CD4-positive, alpha-beta memory T cell (primary cell): ENCODE measurements at regions of chr3 and their contacts with region 1.

Region 1: DNA sequence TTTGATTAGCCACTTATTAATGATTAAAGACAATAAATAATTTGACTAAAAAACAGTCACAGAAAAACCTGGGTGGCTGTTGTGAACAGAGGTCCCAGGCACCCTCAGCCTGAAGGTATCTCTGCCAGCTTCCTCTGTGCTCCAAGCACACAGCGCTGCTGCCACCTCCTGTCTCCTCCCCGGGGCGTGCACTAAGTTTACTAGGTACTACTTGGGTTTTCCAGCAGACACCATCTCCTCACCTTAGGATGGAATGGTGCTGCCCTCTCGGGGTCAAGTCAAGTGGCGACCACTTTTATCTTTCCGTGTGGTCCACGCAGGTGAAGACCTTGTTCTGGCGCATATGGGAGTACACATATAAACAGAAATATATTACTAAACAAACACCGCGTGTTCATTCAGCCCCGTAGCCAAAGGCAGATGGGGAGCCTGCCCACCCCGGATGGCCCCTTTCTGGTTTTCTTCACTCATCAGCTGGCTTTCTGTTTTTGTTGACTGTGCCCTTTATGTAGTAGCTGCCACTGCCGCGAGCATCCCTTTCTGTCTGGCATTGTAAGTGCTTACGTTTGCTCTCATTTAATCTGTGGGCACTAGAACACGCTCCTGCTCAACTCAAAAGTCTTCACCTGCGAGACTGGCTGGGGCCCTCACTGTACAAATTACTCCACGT is 128.0 kb downstream of the LRIG1 start:
- DNase-seq: peak; percentile 35 to 56 (median 44)
- H3K4me3 ChIP-seq: no peak overlapping the region
- H3K4me3 Mint-ChIP-seq: no peak overlapping the region
- H3K27ac ChIP-seq: no peak overlapping the region
- H3K27ac Mint-ChIP-seq: peak overlapping the region in 6 of 7 donors; percentile 36 to 82 (median 74)
- H3K4me1 ChIP-seq: peaks cover 13% of the 10 kb centered on the region
- H3K4me1 Mint-ChIP-seq: peaks cover 18 to 45% (median 19%) of the 10 kb centered on the region in 4 donors
- H3K27me3 ChIP-seq: no peaks in the 10 kb centered on the region
- H3K27me3 Mint-ChIP-seq: no peaks in the 10 kb centered on the region

Region 2: DNA sequence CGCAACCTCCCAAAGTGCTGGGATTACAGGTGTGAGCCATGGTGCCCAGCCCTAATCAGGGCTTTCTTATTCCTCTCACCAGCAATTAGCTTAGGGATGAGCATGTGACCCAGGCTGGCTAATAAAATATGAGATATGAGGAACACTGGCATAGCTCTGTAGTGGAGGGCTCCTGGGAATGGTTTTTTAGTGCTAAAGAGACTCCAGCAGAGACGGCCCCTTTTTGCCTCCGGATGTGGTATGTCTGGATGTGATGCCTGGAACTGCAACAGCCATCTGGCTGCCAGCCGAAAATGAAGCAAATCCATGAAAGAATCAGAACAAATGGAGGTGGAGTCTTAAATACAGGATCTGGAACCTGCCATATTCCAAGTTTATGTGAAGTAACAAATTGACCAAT is 265.0 kb before region 1 on chr3:
- CTCF ChIA-PET with region 1: no interaction called
- POLR2A ChIA-PET with region 1: no interaction called
- intact Hi-C with region 1: no loop called
- DNase-seq: no peak
- H3K4me3 ChIP-seq: no peak overlapping the region
- H3K4me3 Mint-ChIP-seq: no peak overlapping the region
- H3K27ac ChIP-seq: no peak overlapping the region
- H3K27ac Mint-ChIP-seq: no peak overlapping the region
- H3K4me1 ChIP-seq: no peaks in the 10 kb centered on the region
- H3K4me1 Mint-ChIP-seq: peaks cover 0 to 2% (median 0%) of the 10 kb centered on the region in 4 donors
- H3K27me3 ChIP-seq: no peaks in the 10 kb centered on the region
- H3K27me3 Mint-ChIP-seq: peaks cover 0 to 5% of the 10 kb centered on the region in 2 donors

Region 3: GRCh38 chr3:66153481-66154443 is 219.1 kb before region 1 on chr3:
- CTCF ChIA-PET with region 1: no interaction called
- POLR2A ChIA-PET with region 1: no interaction called
- intact Hi-C with region 1: no loop called
- DNase-seq: no peak
- H3K4me3 ChIP-seq: no peak overlapping the region
- H3K4me3 Mint-ChIP-seq: no peak overlapping the region
- H3K27ac ChIP-seq: no peak overlapping the region
- H3K27ac Mint-ChIP-seq: no peak overlapping the region
- H3K4me1 ChIP-seq: no peaks in the 10 kb centered on the region
- H3K4me1 Mint-ChIP-seq: no peaks in the 10 kb centered on the region
- H3K27me3 ChIP-seq: no peaks in the 10 kb centered on the region
- H3K27me3 Mint-ChIP-seq: peaks cover 4 to 5% of the 10 kb centered on the region in 2 donors

Region 4: GRCh38 chr3:66276705-66277274 is 96.0 kb before region 1 on chr3:
- CTCF ChIA-PET with region 1: interaction called, 80 read pairs
- POLR2A ChIA-PET with region 1: interaction called, 24 read pairs
- intact Hi-C with region 1: loop called (anchors 1 kb)
- DNase-seq: peak; percentile 71 to 75 (median 73)
- H3K4me3 ChIP-seq: no peak overlapping the region
- H3K4me3 Mint-ChIP-seq: no peak overlapping the region
- H3K27ac ChIP-seq: no peak overlapping the region
- H3K27ac Mint-ChIP-seq: peak overlapping the region; percentile 6 to 86 (median 71)
- H3K4me1 ChIP-seq: peaks cover 34% of the 10 kb centered on the region
- H3K4me1 Mint-ChIP-seq: peaks cover 25 to 45% (median 34%) of the 10 kb centered on the region in 4 donors
- H3K27me3 ChIP-seq: no peaks in the 10 kb centered on the region
- H3K27me3 Mint-ChIP-seq: no peaks in the 10 kb centered on the region

Region 5: DNA sequence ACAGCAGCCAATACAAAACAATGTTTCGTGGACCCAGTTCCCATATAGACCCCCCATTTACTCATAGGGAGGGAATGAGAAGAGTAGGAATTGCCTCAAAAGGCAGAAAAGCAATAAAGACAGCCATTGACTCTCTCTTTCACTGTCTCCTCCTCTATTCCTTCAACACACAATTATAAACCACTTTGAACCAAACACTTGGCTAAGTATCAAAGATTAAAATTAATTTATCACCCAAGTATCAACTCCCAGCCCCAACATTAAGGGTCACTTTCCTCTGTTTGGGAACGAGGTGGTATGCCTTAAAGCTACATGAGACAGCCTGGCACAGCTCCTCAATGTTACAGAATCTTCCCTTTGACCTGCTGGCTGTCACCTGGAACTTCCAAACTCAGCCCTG is 144.4 kb after region 1 on chr3:
- CTCF ChIA-PET with region 1: no interaction called
- POLR2A ChIA-PET with region 1: no interaction called
- intact Hi-C with region 1: no loop called
- DNase-seq: no peak
- H3K4me3 ChIP-seq: no peak overlapping the region
- H3K4me3 Mint-ChIP-seq: no peak overlapping the region
- H3K27ac ChIP-seq: no peak overlapping the region
- H3K27ac Mint-ChIP-seq: peak overlapping the region in 1 of 7 donors; percentile 86
- H3K4me1 ChIP-seq: no peaks in the 10 kb centered on the region
- H3K4me1 Mint-ChIP-seq: peaks cover 0 to 2% (median 0%) of the 10 kb centered on the region in 4 donors
- H3K27me3 ChIP-seq: no peaks in the 10 kb centered on the region
- H3K27me3 Mint-ChIP-seq: peaks cover 1 to 2% of the 10 kb centered on the region in 2 donors

Region 6: GRCh38 chr3:66609659-66610561 is 237.1 kb after region 1 on chr3:
- CTCF ChIA-PET with region 1: no interaction called
- POLR2A ChIA-PET with region 1: no interaction called
- intact Hi-C with region 1: no loop called
- DNase-seq: no peak
- H3K4me3 ChIP-seq: no peak overlapping the region
- H3K4me3 Mint-ChIP-seq: no peak overlapping the region
- H3K27ac ChIP-seq: no peak overlapping the region
- H3K27ac Mint-ChIP-seq: no peak overlapping the region
- H3K4me1 ChIP-seq: peaks cover 3% of the 10 kb centered on the region
- H3K4me1 Mint-ChIP-seq: peaks cover 2 to 8% (median 4%) of the 10 kb centered on the region in 4 donors
- H3K27me3 ChIP-seq: no peaks in the 10 kb centered on the region
- H3K27me3 Mint-ChIP-seq: no peaks in the 10 kb centered on the region